SK-N-SH (cell line): ENCODE measurements at regions of chr22 and their contacts with region 1.

Region 1: DNA sequence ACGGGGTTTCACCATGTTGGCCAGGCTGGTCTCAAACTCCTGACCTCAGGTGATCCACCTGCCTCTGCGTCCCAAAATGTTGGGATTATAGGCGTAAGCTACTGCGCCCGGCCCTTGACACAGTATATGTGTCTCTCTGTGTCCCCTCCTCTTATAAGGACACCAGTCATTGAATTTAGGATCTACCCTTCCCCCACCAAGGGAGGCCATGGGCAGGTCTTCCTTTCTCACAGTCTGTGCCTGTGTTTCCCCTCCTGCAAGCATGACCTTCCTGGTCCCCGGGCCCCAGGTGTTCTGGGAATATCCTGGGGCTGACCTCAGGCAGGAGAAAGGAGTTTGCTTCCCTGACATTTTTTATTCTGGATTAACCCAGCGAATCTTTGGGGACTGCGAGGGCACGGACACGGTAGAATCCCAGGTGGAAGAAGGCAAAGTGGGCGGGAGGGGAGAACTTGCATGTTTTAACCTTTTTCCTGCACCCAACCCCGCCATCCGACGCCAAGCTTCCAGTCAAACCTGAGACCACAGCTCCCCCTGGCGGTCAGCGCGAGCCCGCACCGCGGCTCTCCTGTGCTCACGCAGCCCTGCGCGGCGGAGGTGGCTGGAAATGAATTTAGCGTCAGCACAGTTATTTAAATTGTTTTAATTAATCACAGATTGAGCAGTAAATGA is 42.1 kb upstream of the ISX start:
- DNase-seq: peak; percentile 72
- H3K4me3 ChIP-seq: peak overlapping the region in 1 of 2 experiments; percentile 53; a peak in 1 of 4 replicates
- H3K27ac ChIP-seq: no peak overlapping the region
- H3K4me1 ChIP-seq: no peaks in the 10 kb centered on the region
- H3K27me3 ChIP-seq: no peaks in the 10 kb centered on the region
- CTCF ChIP-seq: peak; percentile 82
- EP300 ChIP-seq: no peak
- RAD21 ChIP-seq: peak; percentile 80

Region 2: GRCh38 chr22:34414484-34415440 is 609.1 kb before region 1 on chr22:
- CTCF ChIA-PET with region 1: interaction called, 19 read pairs
- POLR2A ChIA-PET with region 1: no interaction called
- DNase-seq: peak; percentile 21
- H3K4me3 ChIP-seq: peak overlapping the region in 1 of 2 experiments; percentile 43; a peak in 1 of 4 replicates
- H3K27ac ChIP-seq: no peak overlapping the region
- H3K4me1 ChIP-seq: no peaks in the 10 kb centered on the region
- H3K27me3 ChIP-seq: no peaks in the 10 kb centered on the region
- CTCF ChIP-seq: peak; percentile 16; the same call in 1 of the 2 replicates
- EP300 ChIP-seq: no peak
- RAD21 ChIP-seq: peak; percentile 73

Region 3: DNA sequence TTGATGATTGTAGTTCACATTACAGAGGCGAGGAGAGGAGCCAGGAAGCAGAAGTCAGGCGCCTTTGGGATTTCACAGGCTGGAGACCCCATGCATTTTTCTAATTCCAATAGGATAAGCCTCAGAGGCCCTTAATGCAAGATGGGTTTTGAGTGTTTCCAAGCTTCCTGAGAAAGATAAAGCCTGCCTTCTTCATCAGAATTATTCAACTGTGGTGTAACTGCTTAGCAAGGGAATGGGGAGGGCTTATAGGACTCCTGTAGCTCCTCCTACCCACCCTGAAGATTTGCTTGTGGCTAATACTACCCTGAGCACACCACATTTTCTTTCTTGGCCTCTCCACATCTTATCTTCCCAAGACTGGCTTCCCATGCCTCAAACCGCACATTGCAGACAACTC is 109.0 kb before region 1 on chr22:
- CTCF ChIA-PET with region 1: no interaction called
- POLR2A ChIA-PET with region 1: no interaction called
- DNase-seq: no peak
- H3K4me3 ChIP-seq: no peak overlapping the region
- H3K27ac ChIP-seq: no peak overlapping the region
- H3K4me1 ChIP-seq: no peaks in the 10 kb centered on the region
- H3K27me3 ChIP-seq: no peaks in the 10 kb centered on the region
- CTCF ChIP-seq: no peak
- EP300 ChIP-seq: no peak
- RAD21 ChIP-seq: no peak

Region 4: GRCh38 chr22:35008213-35008612 is 15.6 kb before region 1 on chr22:
- CTCF ChIA-PET with region 1: interaction called, 67 read pairs
- POLR2A ChIA-PET with region 1: no interaction called
- DNase-seq: no peak
- H3K4me3 ChIP-seq: no peak overlapping the region
- H3K27ac ChIP-seq: no peak overlapping the region
- H3K4me1 ChIP-seq: no peaks in the 10 kb centered on the region
- H3K27me3 ChIP-seq: no peaks in the 10 kb centered on the region
- CTCF ChIP-seq: no peak
- EP300 ChIP-seq: no peak
- RAD21 ChIP-seq: no peak

Region 5: GRCh38 chr22:35037089-35037488 is 13.3 kb after region 1 on chr22:
- CTCF ChIA-PET with region 1: interaction called, 32 read pairs
- POLR2A ChIA-PET with region 1: no interaction called
- DNase-seq: no peak
- H3K4me3 ChIP-seq: no peak overlapping the region
- H3K27ac ChIP-seq: no peak overlapping the region
- H3K4me1 ChIP-seq: peaks cover 0 to 4% of the 10 kb centered on the region in 2 experiments; a peak in 1 of 4 replicates
- H3K27me3 ChIP-seq: no peaks in the 10 kb centered on the region
- CTCF ChIP-seq: peak; percentile 33
- EP300 ChIP-seq: no peak
- RAD21 ChIP-seq: peak; percentile 28; the same call in 1 of the 2 replicates

Region 6: DNA sequence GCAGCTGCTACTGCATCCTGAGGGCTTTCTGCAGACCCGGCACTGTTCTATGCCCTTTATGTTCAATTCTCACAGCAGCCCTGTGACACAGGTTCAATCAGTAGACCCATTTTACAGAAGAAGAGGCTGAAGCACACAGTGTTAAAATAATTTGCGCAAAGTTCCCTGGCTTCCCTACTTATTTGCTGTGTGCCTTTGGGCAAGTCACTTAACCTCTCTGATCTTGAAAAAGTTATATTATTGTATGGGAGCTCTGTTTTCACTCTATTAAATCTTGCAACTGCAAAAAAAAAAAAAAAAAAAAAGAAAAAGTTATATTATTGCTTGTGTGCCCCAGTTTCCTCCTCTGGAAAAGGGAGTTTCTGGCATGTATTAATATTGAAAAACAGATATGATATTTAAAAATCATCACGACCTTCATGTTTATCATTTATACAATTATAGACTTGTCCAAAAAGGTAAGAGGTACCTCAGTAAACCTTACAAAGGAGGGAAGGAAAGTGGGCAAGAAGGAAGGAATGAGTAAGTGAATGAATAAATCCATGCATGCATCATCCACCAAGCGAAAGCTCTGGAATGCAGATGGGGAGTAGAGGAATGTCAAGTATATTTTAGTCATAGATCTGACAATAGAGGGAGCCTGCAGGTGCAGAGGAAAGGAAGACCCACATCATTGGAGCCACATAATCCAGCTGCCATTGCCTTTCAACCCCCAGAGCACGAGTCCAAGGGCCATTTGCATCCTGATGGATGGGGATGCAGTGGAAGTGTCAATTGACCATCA is 21.0 kb after region 1 on chr22:
- CTCF ChIA-PET with region 1: interaction called, 10 read pairs
- POLR2A ChIA-PET with region 1: no interaction called
- DNase-seq: no peak
- H3K4me3 ChIP-seq: no peak overlapping the region
- H3K27ac ChIP-seq: no peak overlapping the region
- H3K4me1 ChIP-seq: peaks cover 0 to 2% of the 10 kb centered on the region in 2 experiments; a peak in 1 of 4 replicates
- H3K27me3 ChIP-seq: no peaks in the 10 kb centered on the region
- CTCF ChIP-seq: no peak
- EP300 ChIP-seq: no peak
- RAD21 ChIP-seq: no peak

Region 7: GRCh38 chr22:35150183-35151107 is 126.6 kb after region 1 on chr22:
- CTCF ChIA-PET with region 1: interaction called, 12 read pairs
- POLR2A ChIA-PET with region 1: no interaction called
- DNase-seq: peak; percentile 61
- H3K4me3 ChIP-seq: peak overlapping the region in 1 of 2 experiments; percentile 14; a peak in 1 of 4 replicates
- H3K27ac ChIP-seq: no peak overlapping the region
- H3K4me1 ChIP-seq: no peaks in the 10 kb centered on the region; a peak in 1 of 4 replicates
- H3K27me3 ChIP-seq: peaks cover 5% of the 10 kb centered on the region; the same call in 1 of the 2 replicates
- CTCF ChIP-seq: peak; percentile 80
- EP300 ChIP-seq: no peak
- RAD21 ChIP-seq: peak; percentile 64